ENCODE measurements at regions of chr7 and their contacts with region 1.

Region 1: GRCh38 chr7:135662373-135663114 is at the start of gene STMP1:
- DNase-seq: peak; percentile 86
- H3K4me3 ChIP-seq: peak within 1 kb of the TSS; percentile 93
- H3K27ac ChIP-seq: peak within 1 kb of the TSS; percentile 98
- H3K27me3 ChIP-seq: no peaks in the 10 kb centered on the region
- CTCF ChIP-seq: peak; percentile 70
- polyA plus RNA-seq, gene STMP1: 39.3 and 48.2 TPM in 2 replicates

Region 2: DNA sequence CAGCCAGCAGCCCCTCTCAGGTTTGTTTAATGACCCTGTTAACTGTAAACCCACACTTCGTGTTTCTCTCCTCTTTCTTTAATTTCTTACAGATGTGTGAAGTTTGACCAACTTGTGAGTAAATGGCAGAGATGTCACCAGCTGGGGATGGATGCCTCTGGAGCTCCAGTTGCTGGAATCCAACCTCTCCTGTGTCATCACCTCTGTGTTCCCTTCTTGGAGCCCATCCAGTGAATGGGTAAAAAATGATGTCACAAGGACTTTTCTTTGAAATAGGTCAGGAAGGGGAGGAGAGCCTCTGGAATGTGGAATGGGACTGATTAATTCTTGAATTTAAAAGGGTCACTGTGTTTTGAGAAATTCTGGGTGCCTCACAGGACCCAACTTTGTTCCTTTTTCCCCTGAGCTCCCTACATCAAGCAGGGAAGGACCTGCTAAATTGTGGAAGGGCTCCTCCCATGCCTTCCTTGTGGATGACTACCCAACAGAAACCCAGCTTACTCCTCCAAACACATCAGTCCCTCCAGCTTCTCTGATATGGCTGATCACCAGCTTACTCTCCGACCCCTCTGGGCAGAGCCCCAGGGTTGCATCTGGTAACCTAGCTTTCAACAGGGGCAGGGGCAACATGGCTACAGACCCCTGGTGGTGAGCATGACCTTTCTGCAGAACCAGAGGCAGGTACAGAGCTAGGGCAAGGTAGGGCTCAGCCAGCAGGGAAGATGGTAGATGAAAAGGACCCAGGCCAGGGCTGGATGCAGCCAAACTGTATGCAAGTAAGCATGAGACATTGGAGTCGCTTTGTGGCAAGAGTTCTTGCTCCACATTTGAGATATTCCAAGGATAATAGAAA is 361.4 kb before region 1 on chr7:
- CTCF ChIA-PET with region 1: no interaction called
- POLR2A ChIA-PET with region 1: no interaction called
- DNase-seq: no peak
- H3K4me3 ChIP-seq: no peak overlapping the region
- H3K27ac ChIP-seq: no peak overlapping the region
- H3K27me3 ChIP-seq: peaks cover 2% of the 10 kb centered on the region
- CTCF ChIP-seq: no peak

Region 3: DNA sequence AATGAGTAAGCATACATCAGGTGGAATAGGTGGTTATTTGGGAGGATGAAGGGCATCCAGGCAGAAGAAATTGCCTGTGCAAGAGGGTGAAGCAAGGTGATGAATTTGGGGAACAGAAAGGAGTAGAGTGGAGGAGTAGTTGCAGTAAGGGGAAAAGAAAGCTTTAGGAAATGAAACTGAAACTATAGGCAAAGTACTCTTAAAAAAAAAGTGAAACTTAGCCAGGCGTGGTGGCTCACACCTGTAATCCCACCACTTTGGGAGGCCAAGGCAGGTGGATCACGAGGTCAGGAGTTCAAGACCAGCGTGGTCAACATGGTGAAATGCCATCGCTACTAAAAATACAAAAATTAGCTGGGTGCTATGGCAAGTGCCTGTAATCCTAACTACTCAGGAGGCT is 87.2 kb before region 1 on chr7:
- CTCF ChIA-PET with region 1: no interaction called
- POLR2A ChIA-PET with region 1: no interaction called
- DNase-seq: no peak
- H3K4me3 ChIP-seq: no peak overlapping the region
- H3K27ac ChIP-seq: no peak overlapping the region
- H3K27me3 ChIP-seq: no peaks in the 10 kb centered on the region
- CTCF ChIP-seq: no peak

Region 4: DNA sequence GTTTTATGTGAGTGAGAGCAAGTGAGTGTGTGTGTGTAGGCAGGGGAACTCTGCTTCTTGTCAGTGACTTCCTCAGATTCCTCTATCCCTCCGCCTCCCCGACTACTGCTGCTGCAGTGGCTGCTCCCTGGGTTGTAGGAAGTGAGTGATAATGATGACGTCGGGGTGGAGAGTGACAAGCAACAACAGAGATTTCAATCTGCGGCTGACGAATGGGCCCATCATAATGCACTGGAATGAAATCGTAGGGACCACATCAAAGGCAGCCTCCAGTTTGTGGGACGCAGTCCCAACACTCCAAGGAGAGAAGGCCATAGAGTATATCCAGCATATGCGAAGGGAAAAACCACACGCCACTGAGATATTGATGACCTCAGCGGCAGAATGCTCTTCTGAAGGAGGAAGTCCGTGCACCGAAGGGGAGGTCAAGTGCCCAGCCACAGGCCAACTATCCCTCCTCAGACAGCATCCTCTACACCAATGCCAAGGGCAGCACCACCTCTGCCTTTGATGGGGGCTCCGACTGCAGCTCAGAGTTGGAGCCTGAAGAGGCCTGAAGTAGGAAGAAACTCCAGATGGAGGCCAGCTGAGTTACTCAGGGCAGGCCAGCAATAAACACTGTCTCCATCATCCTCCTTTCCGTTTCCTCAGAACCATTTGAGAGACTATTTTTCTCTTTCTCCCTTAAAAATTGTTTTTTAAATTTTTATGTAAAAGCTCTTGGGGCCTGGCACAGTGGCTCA is 11.5 kb before region 1 on chr7:
- CTCF ChIA-PET with region 1: interaction called, 83 read pairs
- POLR2A ChIA-PET with region 1: interaction called, 7 read pairs
- DNase-seq: no peak
- H3K4me3 ChIP-seq: no peak overlapping the region
- H3K27ac ChIP-seq: no peak overlapping the region
- H3K27me3 ChIP-seq: no peaks in the 10 kb centered on the region
- CTCF ChIP-seq: no peak

Measured in AG04450 (cell line).